ENCODE measurements at regions of chr5 and their contacts with region 1.

Region 1: DNA sequence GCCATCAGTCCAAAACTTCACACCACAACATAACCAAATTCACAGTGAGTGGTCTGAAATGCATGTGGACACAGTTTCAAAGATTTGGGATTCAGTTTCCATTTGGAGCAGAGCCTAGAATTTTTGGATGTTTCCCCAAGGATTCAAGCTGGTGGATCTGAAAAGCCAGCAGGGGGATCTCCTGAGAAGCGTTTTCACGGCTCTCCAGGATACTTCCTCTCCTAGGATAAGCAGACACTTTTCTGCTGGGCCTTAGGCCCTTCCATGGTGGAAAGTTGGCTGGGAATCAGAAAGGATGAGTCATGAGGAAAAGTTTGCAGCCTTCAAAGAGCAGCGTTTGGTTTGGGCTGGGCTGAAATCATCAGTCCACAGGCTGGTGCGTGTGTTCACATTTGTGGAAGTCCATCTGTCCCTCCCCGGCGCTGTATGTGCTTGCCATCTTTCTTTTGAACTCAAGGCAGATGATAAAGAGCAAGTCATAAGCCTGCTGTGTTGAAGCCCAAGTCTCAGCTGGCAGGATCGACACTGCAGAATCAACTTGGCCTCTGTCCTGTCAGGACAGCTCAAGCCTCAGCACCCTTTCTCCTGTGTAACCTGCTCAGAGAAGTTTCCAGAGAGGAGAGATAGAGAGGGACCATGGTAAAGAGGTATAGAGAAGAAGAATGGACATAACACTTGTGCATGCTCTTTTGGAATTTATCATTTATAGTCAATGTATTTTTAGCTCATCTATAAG is 152.6 kb upstream of the MSX2 start:
- DNase-seq: peak; percentile 98
- ATAC-seq: peak; percentile 92
- H3K4me3 ChIP-seq: no peak overlapping the region
- H3K27ac ChIP-seq: peak overlapping the region; percentile 77
- H3K4me1 ChIP-seq: peaks cover 12% of the 10 kb centered on the region
- H3K27me3 ChIP-seq: no peaks in the 10 kb centered on the region
- CTCF ChIP-seq: peak; percentile 59
- POLR2A ChIP-seq: no peak
- RAD21 ChIP-seq: peak; percentile 48

Region 2: DNA sequence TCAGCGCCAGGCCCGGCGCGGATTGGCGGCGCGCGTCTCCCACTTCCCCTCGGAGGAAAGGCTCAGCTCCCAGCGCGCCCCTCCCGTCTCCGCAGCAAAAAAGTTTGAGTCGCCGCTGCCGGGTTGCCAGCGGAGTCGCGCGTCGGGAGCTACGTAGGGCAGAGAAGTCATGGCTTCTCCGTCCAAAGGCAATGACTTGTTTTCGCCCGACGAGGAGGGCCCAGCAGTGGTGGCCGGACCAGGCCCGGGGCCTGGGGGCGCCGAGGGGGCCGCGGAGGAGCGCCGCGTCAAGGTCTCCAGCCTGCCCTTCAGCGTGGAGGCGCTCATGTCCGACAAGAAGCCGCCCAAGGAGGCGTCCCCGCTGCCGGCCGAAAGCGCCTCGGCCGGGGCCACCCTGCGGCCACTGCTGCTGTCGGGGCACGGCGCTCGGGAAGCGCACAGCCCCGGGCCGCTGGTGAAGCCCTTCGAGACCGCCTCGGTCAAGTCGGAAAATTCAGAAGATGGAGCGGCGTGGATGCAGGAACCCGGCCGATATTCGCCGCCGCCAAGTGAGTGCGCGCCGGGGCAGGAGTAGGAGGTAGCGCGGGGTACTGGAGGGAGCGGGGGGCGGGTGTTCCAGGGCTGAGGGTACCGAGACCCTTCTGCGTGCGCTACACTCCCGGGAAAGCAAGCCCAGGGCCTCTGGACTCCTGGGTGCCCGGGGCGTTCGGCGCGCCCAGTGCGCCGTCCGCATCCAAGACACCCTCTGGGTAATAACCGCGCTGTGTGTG is 152.8 kb after region 1 on chr5 and contains the start of gene MSX2:
- CTCF ChIA-PET with region 1: no interaction called
- POLR2A ChIA-PET with region 1: no interaction called
- dilution Hi-C with region 1: no loop called
- in situ Hi-C with region 1: no loop called
- intact Hi-C with region 1: loop called (anchors 2 kb)
- DNase-seq: peak; percentile 86
- ATAC-seq: peak; percentile 96
- H3K4me3 ChIP-seq: peak within 1 kb of the TSS; percentile 54
- H3K27ac ChIP-seq: peak within 1 kb of the TSS; percentile 38
- H3K4me1 ChIP-seq: no peaks in the 10 kb centered on the region
- H3K27me3 ChIP-seq: peaks cover 40% of the 10 kb centered on the region
- CTCF ChIP-seq: no peak
- POLR2A ChIP-seq: peak; percentile 59
- RAD21 ChIP-seq: no peak
- total RNA-seq, gene MSX2: 1.9 and 2.2 TPM in 2 replicates

Region 3: DNA sequence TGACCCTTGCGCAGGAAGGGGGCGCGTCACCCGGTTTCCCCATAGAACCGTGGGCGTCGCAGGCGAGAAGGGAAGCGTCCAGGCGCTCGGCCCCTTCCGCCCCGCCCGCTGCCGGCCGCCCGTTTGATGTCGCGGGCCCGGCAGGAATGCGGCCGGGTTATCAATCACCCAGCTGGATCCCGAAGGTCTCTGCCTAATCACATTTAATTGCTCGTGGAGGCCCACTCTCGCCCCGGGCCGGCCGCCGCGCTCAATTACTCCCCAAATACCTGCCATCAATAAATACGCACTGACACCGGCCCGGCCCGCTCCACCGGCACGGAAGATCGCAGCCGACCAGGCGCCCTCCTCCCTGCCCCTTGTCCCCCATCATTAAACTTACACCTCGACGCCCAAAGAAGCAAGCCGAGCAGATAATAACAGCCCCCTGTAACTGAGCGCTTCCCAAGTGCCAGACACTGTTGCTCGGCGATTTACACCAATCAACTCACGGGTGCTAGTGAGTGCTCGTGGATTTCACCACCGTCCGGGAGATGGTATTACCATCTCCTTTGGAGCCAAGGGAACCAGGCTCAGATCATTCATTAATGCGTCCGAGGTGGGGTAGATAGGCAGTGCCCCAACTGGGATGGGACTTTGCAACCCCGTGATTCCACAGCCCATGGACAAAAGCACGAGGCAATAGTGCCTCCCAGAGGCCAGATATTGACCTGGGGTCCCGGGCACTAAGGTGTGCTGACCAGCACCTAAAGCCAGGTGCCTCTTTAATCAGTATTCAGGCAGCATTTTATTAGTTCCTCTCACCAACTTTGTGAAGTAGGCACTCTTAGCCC is 163.9 kb after region 1 on chr5:
- CTCF ChIA-PET with region 1: no interaction called
- POLR2A ChIA-PET with region 1: interaction called, 6 read pairs
- dilution Hi-C with region 1: no loop called
- in situ Hi-C with region 1: no loop called
- intact Hi-C with region 1: loop called (anchors 5 kb)
- DNase-seq: no peak
- ATAC-seq: peak; percentile 51
- H3K4me3 ChIP-seq: peak overlapping the region; percentile 2; the same call in 1 of the 2 replicates
- H3K27ac ChIP-seq: peak overlapping the region; percentile 36
- H3K4me1 ChIP-seq: peaks cover 6% of the 10 kb centered on the region
- H3K27me3 ChIP-seq: peaks cover 27% of the 10 kb centered on the region
- CTCF ChIP-seq: peak; percentile 39
- POLR2A ChIP-seq: no peak
- RAD21 ChIP-seq: peak; percentile 61

Measured in IMR-90 (cell line).